ENCODE measurements at regions of chr1 and their contacts with region 1.

Region 1: GRCh38 chr1:246931549-246932365 is at the start of gene AHCTF1:
- DNase-seq: peak; percentile 95 to 98
- ATAC-seq: peak; percentile 97 to 98 (median 98)
- H3K4me3 ChIP-seq: peak within 1 kb of the TSS; percentile 98
- H3K27ac ChIP-seq: peak within 1 kb of the TSS; percentile 98
- H3K4me1 ChIP-seq: peaks cover 20% of the 10 kb centered on the region
- H3K27me3 ChIP-seq: no peaks in the 10 kb centered on the region
- CTCF ChIP-seq: no peak
- total RNA-seq, gene AHCTF1: 16.8 to 29.6 (median 25.3) TPM

Region 2: DNA sequence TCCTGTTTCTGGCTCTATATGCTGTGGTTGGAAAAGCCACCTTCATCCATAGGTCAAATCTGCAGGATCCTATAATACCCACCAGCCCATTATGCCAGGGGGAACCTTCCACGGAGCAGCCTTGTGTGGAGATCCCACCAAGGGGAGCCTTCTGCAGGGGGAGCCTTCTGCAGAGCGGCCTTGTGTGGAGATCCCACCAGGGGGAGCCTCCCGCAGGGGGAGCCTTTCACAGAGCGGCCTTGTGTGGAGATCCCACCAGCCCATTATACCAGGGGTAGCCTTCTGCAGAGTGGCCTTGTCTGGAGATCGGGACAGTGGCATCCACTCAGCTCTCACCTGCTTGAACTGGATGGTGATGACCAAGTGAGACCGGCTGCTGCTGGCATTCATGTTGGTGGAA is 122.3 kb before region 1 on chr1:
- intact Hi-C with region 1: no loop called
- DNase-seq: no peak
- ATAC-seq: peak in 2 of 4 donors; percentile 9 to 45
- H3K4me3 ChIP-seq: no peak overlapping the region
- H3K27ac ChIP-seq: no peak overlapping the region
- H3K4me1 ChIP-seq: no peaks in the 10 kb centered on the region
- H3K27me3 ChIP-seq: no peaks in the 10 kb centered on the region
- CTCF ChIP-seq: no peak

Region 3: DNA sequence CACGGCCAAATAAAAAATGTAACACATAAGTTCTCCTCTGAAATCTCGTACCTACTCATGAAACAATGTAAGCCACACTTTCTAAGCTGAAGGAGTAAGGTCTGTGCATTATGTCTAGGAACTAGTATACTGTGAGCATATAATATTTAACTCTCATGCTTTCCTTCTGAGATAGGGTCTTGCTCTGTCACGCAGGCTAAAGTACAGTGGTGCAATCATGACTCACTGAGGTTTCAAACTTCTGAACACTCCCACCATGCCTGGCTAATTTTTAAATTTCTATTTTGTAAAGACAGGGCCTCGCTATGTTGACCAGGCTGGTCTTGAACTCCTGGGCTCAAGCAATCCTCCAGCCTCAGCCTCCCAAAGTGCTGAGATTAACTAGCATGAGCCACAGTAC is 71.4 kb before region 1 on chr1:
- intact Hi-C with region 1: no loop called
- DNase-seq: no peak
- ATAC-seq: no peak
- H3K4me3 ChIP-seq: no peak overlapping the region
- H3K27ac ChIP-seq: no peak overlapping the region
- H3K4me1 ChIP-seq: no peaks in the 10 kb centered on the region
- H3K27me3 ChIP-seq: no peaks in the 10 kb centered on the region
- CTCF ChIP-seq: no peak

Region 4: DNA sequence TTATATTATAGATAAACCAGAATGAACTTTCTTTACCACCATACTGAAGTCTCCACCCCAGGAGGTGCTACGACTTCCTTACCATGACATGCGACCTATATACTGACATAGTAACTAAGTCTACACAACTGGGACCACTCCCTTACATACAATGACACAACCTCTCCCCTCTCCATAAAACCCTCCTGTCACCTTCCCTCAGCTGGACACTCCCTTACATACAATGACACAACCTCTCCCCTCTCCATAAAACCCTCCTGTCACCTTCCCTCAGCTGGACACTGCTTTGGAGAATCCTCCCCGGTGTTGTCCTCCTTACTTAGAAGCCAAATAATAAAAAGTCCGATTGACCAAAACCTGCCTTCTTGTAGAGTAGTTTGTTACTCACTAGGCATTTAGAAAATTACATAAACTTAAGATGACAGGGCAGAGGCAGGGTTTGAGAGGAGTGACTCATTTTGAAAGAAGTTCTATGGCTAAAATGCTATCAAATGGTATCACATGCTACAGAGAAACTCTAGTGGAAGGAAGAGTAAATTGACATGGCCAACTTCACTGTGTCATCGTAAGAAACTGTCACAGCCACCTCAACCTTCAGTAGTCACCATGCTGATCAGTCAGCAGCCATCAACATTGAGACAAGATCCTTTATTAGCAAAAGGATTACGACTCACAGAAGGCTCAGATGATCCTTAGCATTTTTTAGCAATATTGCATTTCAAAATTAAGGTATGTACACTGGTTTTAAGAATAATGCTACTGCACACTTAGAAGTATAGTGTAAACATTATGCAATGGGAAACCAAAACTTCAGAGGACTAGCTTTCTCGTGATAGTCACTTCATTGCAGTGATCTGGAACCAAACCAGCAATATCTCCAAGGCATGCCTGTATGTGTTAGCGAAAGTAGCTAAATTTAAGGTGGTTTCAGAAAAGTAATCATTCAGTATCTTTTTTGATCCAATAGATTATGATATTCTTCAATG is 56.4 kb before region 1 on chr1:
- intact Hi-C with region 1: no loop called
- DNase-seq: no peak
- ATAC-seq: peak; percentile 30 to 73 (median 56)
- H3K4me3 ChIP-seq: no peak overlapping the region
- H3K27ac ChIP-seq: no peak overlapping the region
- H3K4me1 ChIP-seq: peaks cover 7% of the 10 kb centered on the region
- H3K27me3 ChIP-seq: no peaks in the 10 kb centered on the region
- CTCF ChIP-seq: no peak

Region 5: DNA sequence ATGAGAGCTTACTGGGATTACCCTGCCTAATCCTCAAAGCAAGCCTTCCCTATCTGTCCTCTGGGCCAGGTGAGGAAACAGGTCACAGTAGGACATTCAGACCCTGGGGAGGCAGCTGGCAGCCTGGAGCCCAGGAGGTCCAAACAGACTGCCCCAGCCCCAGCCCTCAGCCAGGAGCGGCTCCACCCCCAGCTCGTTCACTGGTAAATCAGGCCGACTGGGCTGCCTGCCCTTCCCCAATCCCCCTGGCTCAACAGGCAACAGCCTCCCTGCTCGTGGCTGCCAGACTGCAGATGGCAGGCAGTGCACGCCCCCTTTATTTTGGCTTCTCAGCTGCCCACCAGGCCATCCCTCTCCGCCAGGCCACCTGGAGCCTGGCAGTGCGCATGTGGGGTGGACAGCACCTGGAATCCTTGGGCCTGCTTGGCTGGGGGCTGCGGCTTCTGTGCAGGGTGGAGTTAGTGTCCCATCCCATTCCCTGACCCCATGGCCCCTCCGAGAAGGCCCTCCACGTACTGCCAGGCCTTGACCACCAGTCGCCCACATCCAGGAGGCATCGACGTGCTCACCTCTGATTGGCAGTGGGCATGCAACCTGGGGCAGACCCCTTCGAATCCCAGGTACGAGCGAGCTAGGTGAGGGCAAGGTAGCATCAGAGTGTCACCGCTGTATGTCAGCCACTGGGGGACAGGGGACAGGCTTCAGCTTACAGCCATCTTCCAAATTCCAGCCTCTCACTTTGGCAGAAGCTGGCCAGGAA is 158.0 kb after region 1 on chr1:
- intact Hi-C with region 1: loop called in 1 of 2 experiments (anchors 10 kb)
- DNase-seq: no peak
- ATAC-seq: no peak
- H3K4me3 ChIP-seq: no peak overlapping the region
- H3K27ac ChIP-seq: no peak overlapping the region
- H3K4me1 ChIP-seq: no peaks in the 10 kb centered on the region
- H3K27me3 ChIP-seq: no peaks in the 10 kb centered on the region
- CTCF ChIP-seq: no peak

Region 6: GRCh38 chr1:247115141-247115510 is 183.4 kb after region 1 on chr1:
- intact Hi-C with region 1: no loop called
- DNase-seq: no peak
- ATAC-seq: no peak
- H3K4me3 ChIP-seq: no peak overlapping the region
- H3K27ac ChIP-seq: no peak overlapping the region
- H3K4me1 ChIP-seq: no peaks in the 10 kb centered on the region
- H3K27me3 ChIP-seq: no peaks in the 10 kb centered on the region
- CTCF ChIP-seq: no peak